Activated CD4-positive, alpha-beta T cell treated with anti-CD3 and anti-CD28 coated beads for 36 hours (primary cell): ENCODE measurements at regions of chr13 and their contacts with region 1.

Region 1: DNA sequence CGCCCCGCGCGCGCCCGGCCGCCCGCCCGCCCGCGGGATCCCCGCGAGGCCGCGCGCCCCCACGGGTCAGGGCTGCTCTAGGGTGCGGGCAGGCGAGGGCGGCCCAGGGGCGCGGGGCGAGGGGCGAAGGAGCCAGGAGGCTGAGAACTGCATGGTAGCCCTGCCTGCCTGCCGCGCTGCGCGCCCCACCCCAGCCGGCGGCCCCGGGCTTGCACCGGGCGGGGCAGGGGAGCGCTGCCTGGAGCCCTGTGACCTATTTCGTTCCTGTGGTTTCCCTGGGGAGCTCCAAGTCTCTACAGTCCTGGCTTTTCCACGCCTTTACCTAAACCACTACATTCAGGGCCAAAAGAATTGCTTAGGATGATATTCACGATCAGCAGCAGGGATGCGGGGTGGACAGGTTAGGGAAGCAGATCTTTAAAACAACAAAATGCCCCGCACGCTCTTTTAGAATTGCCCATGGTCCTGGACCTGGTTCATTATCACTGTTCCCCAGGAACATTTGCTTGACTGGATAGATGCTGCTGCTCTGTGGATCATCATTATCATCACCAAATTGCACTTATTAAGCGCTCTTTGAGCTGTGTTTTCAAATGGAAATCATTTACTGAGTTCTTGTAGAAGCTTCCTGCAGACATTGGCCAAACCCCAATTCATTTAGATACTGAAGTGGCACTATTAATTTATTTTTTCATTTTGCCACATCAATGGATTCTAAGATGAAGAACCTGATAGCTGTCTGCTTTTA is 423 bp upstream of the GPR12 start:
- DNase-seq: peak; percentile 11
- ATAC-seq: no peak
- H3K4me3 Mint-ChIP-seq: no peak overlapping the region
- H3K27ac Mint-ChIP-seq: no peak overlapping the region
- H3K4me1 Mint-ChIP-seq: peaks cover 9% of the 10 kb centered on the region
- H3K27me3 Mint-ChIP-seq: peaks cover 56% of the 10 kb centered on the region

Region 2: GRCh38 chr13:26628706-26629105 is 132.3 kb before region 1 on chr13:
- CTCF ChIA-PET with region 1: no interaction called
- POLR2A ChIA-PET with region 1: no interaction called
- intact Hi-C with region 1: no loop called
- DNase-seq: no peak
- ATAC-seq: no peak
- H3K4me3 Mint-ChIP-seq: no peak overlapping the region
- H3K27ac Mint-ChIP-seq: no peak overlapping the region
- H3K4me1 Mint-ChIP-seq: no peaks in the 10 kb centered on the region
- H3K27me3 Mint-ChIP-seq: no peaks in the 10 kb centered on the region

Region 3: DNA sequence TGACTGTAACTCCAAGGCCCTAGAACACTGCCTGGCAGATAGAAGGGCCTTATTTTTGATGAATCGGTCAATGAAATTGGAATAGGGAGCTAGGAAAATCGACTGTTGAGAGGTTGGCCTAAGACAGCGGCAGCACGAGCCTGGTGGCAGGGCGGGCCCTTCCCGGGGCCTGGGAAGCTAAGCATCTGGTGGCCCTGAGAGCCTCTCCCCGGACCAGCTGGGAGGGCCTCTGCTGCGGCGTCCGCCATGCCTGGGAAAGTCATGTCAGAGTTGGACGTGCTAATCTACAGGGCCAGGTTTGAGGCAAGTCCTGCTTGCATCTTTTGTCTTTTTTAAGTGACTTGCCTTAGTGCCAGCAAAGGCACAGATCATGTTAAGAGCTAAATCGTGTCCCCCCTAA is 10.8 kb after region 1 on chr13:
- CTCF ChIA-PET with region 1: no interaction called
- POLR2A ChIA-PET with region 1: no interaction called
- intact Hi-C with region 1: loop called in 1 of 2 experiments (anchors 1 kb)
- DNase-seq: no peak
- ATAC-seq: no peak
- H3K4me3 Mint-ChIP-seq: no peak overlapping the region
- H3K27ac Mint-ChIP-seq: no peak overlapping the region
- H3K4me1 Mint-ChIP-seq: no peaks in the 10 kb centered on the region
- H3K27me3 Mint-ChIP-seq: peaks cover 7% of the 10 kb centered on the region

Region 4: GRCh38 chr13:26881178-26881577 is 120.2 kb after region 1 on chr13:
- CTCF ChIA-PET with region 1: no interaction called
- POLR2A ChIA-PET with region 1: no interaction called
- intact Hi-C with region 1: no loop called
- DNase-seq: no peak
- ATAC-seq: no peak
- H3K4me3 Mint-ChIP-seq: no peak overlapping the region
- H3K27ac Mint-ChIP-seq: no peak overlapping the region
- H3K4me1 Mint-ChIP-seq: no peaks in the 10 kb centered on the region
- H3K27me3 Mint-ChIP-seq: peaks cover 14% of the 10 kb centered on the region

Region 5: GRCh38 chr13:27510082-27510481 is 749.1 kb after region 1 on chr13:
- CTCF ChIA-PET with region 1: no interaction called
- POLR2A ChIA-PET with region 1: no interaction called
- intact Hi-C with region 1: no loop called
- DNase-seq: no peak
- ATAC-seq: no peak
- H3K4me3 Mint-ChIP-seq: no peak overlapping the region
- H3K27ac Mint-ChIP-seq: no peak overlapping the region
- H3K4me1 Mint-ChIP-seq: no peaks in the 10 kb centered on the region
- H3K27me3 Mint-ChIP-seq: no peaks in the 10 kb centered on the region